ENCODE measurements at regions of chr20 and their contacts with region 1.

Region 1: GRCh38 chr20:3679749-3680700 is 1.8 kb downstream of the ADAM33 start:
- DNase-seq: peak; percentile 59
- H3K4me3 ChIP-seq: no peak overlapping the region
- H3K27ac ChIP-seq: peak overlapping the region; percentile 13 to 62; a peak in 3 of 4 replicates
- H3K4me1 ChIP-seq: peaks cover 19 to 24% of the 10 kb centered on the region in 2 experiments; a peak in 2 of 4 replicates
- H3K27me3 ChIP-seq: peaks cover 15% of the 10 kb centered on the region
- CTCF ChIP-seq: no peak
- EP300 ChIP-seq: no peak
- RAD21 ChIP-seq: no peak

Region 2: GRCh38 chr20:3658716-3659491 is 21.1 kb before region 1 on chr20:
- CTCF ChIA-PET with region 1: interaction called, 15 read pairs
- POLR2A ChIA-PET with region 1: no interaction called
- DNase-seq: no peak
- H3K4me3 ChIP-seq: no peak overlapping the region
- H3K27ac ChIP-seq: no peak overlapping the region
- H3K4me1 ChIP-seq: peaks cover 0 to 13% of the 10 kb centered on the region in 2 experiments; a peak in 1 of 4 replicates
- H3K27me3 ChIP-seq: peaks cover 41% of the 10 kb centered on the region
- CTCF ChIP-seq: no peak
- EP300 ChIP-seq: no peak
- RAD21 ChIP-seq: no peak

Region 3: GRCh38 chr20:3739054-3739925 is 59.3 kb after region 1 on chr20:
- CTCF ChIA-PET with region 1: interaction called, 10 read pairs
- POLR2A ChIA-PET with region 1: no interaction called
- DNase-seq: no peak
- H3K4me3 ChIP-seq: no peak overlapping the region
- H3K27ac ChIP-seq: no peak overlapping the region; a peak in 1 of 4 replicates
- H3K4me1 ChIP-seq: peaks cover 0 to 22% of the 10 kb centered on the region in 2 experiments; a peak in 1 of 4 replicates
- H3K27me3 ChIP-seq: no peaks in the 10 kb centered on the region
- CTCF ChIP-seq: no peak
- EP300 ChIP-seq: no peak
- RAD21 ChIP-seq: no peak

Region 4: GRCh38 chr20:3767427-3768341 is 87.7 kb after region 1 on chr20 and contains the start of gene ADISSP:
- CTCF ChIA-PET with region 1: interaction called, 47 read pairs
- POLR2A ChIA-PET with region 1: no interaction called
- DNase-seq: peak; percentile 99
- H3K4me3 ChIP-seq: peak within 1 kb of the TSS; percentile 83 to 93
- H3K27ac ChIP-seq: peak within 1 kb of the TSS; percentile 94 to 95
- H3K4me1 ChIP-seq: peaks cover 9 to 22% of the 10 kb centered on the region in 2 experiments; a peak in 3 of 4 replicates
- H3K27me3 ChIP-seq: no peaks in the 10 kb centered on the region
- CTCF ChIP-seq: peak; percentile 28
- EP300 ChIP-seq: no peak
- RAD21 ChIP-seq: no peak
- polyA plus RNA-seq, gene ADISSP: 59.9 and 73.9 TPM in 2 replicates

Region 5: DNA sequence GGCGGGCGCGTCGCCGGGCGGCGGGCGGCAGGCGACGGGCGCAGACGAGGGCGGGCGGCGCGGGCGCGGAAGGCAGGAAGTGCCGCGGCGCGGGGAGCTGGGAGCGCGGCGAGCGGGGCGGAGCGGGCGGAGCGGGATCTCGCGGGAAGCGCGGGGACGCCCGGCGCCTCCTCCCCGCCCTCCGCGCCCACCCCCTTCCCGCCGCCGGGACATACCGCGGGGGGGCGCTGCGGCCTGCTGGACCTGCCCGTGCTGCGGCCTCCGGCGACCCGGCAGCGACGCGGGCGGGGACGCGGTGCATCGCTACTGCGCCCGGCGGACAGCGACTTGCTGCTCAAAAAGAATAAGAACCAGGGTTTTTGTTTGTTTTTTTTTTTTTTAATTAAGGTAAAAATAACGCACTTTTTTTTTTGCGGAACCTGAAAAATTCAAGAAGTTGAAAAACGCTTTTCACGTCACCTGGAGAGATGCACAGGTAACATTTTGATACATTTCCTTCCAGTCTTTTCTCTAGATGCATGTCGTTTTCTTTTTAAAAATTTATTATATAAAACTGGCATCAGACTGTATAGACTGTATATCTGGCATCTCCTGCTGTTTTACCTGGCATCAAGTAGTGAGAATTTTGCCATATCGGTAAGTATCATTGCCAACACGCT is 106.8 kb after region 1 on chr20 and contains the start of gene CENPB:
- CTCF ChIA-PET with region 1: interaction called, 13 read pairs
- POLR2A ChIA-PET with region 1: no interaction called
- DNase-seq: peak; percentile 98
- H3K4me3 ChIP-seq: peak within 1 kb of the TSS; percentile 63 to 74
- H3K27ac ChIP-seq: peak within 1 kb of the TSS; percentile 41 to 82
- H3K4me1 ChIP-seq: peaks cover 26 to 27% of the 10 kb centered on the region in 2 experiments; a peak in 3 of 4 replicates
- H3K27me3 ChIP-seq: no peaks in the 10 kb centered on the region
- CTCF ChIP-seq: peak; percentile 70
- EP300 ChIP-seq: no peak
- RAD21 ChIP-seq: peak; percentile 77
- polyA plus RNA-seq, gene CENPB: 37.6 and 41.2 TPM in 2 replicates

Region 6: DNA sequence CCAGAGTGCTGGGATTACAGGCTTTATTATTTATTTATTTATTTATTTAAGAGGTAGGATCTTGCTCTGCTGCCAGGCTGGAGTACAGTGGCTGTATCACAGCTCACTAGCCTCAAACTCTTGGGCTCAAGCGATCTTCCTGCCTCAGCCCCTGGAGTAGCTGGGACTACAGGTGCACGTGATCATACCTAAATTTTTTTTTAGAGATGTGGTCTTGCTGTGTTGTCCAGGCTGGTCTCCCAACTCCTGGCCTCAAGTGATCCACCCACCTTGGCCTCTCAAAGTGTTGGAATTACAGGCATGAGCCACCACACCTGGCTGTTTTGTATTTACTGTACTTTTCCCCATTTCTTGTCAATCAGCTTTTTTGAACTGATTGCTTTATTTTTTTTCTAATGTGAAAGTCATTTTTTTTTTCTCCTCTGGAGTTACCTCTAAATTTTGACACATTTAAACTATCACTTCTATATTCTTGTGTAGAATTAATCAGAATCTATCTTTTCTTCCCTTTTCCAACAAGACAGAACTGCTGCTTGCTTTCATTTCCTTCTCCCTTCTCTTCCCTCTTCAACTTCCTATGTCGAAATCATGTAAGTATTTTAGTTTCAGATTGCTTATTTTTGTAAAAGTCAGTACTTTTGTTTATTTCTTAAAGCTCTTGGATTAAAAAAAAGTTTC is 221.1 kb after region 1 on chr20:
- CTCF ChIA-PET with region 1: no interaction called
- POLR2A ChIA-PET with region 1: no interaction called
- DNase-seq: no peak
- H3K4me3 ChIP-seq: no peak overlapping the region
- H3K27ac ChIP-seq: peak overlapping the region in 1 of 2 experiments; percentile 8; a peak in 1 of 4 replicates
- H3K4me1 ChIP-seq: peaks cover 0 to 18% of the 10 kb centered on the region in 2 experiments; a peak in 2 of 4 replicates
- H3K27me3 ChIP-seq: no peaks in the 10 kb centered on the region
- CTCF ChIP-seq: no peak
- EP300 ChIP-seq: no peak
- RAD21 ChIP-seq: no peak